MCF 10A (cell line): ENCODE measurements at regions of chr12 and their contacts with region 1.

Region 1: GRCh38 chr12:54958048-54958658 is 26.4 kb downstream of the TESPA1 start:
- DNase-seq: peak; percentile 71
- H3K4me3 Mint-ChIP-seq: no peak overlapping the region
- H3K27ac Mint-ChIP-seq: no peak overlapping the region
- H3K4me1 Mint-ChIP-seq: no peaks in the 10 kb centered on the region
- H3K27me3 Mint-ChIP-seq: peaks cover 48% of the 10 kb centered on the region
- CTCF ChIP-seq: peak; percentile 71

Region 2: DNA sequence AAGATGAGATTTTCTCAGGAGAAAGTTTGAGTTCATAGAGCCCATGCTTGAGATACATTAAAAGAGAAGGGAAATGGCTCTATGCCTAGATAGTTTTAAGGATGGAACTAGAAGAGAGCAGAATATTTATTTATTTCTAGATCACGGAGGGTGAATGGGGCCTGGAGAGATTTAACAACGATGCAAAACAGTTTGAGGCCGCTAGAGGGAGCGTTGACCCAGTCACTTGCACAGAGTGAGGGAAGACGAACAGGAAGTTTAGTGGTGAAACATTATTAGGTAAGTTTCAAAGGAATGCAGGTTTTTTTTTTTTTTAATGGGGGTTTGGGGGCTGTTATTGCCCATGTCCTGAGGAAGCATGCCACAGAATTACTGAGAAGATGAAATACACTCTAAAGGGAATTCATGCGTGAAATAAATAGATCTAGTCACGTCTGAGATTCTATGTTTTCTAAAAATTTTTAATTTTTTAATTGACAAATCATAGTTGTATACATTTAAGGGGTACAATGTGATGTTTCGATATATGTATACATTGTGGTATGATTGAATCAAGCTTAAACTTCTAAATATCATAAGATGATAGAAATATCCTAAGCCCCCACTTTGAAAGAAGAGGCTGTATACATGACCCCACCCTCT is 354.9 kb before region 1 on chr12:
- CTCF ChIA-PET with region 1: interaction called, 9 read pairs
- POLR2A ChIA-PET with region 1: no interaction called
- intact Hi-C with region 1: loop called (anchors 1 kb)
- DNase-seq: peak; percentile 78
- H3K4me3 Mint-ChIP-seq: no peak overlapping the region
- H3K27ac Mint-ChIP-seq: no peak overlapping the region
- H3K4me1 Mint-ChIP-seq: peaks cover 7% of the 10 kb centered on the region
- H3K27me3 Mint-ChIP-seq: peaks cover 47% of the 10 kb centered on the region
- CTCF ChIP-seq: peak; percentile 73

Region 3: DNA sequence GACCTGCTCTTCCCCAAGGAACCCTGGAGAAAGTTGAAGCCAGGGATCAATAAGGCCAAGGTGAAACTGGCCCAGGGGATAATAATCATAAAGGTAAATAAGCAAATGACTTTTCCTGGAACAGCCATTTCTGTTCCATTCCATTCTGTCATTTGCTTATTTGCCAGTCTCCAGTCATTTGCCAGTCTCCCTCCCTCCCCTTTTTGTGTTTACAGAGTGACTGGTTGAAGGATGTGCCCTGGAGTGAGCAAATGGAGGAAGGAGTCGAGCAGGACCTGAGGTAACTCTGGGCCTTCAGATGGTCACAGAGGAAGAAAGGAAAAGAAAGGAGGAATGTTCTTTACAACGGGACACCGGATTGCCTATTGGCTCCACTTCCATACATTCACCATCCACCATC is 292.1 kb before region 1 on chr12:
- CTCF ChIA-PET with region 1: no interaction called
- POLR2A ChIA-PET with region 1: no interaction called
- intact Hi-C with region 1: no loop called
- DNase-seq: no peak
- H3K4me3 Mint-ChIP-seq: no peak overlapping the region
- H3K27ac Mint-ChIP-seq: no peak overlapping the region
- H3K4me1 Mint-ChIP-seq: no peaks in the 10 kb centered on the region
- H3K27me3 Mint-ChIP-seq: peaks cover 27% of the 10 kb centered on the region
- CTCF ChIP-seq: no peak

Region 4: GRCh38 chr12:54701940-54702592 is 256.1 kb before region 1 on chr12:
- CTCF ChIA-PET with region 1: interaction called, 34 read pairs
- POLR2A ChIA-PET with region 1: no interaction called
- intact Hi-C with region 1: loop called (anchors 1 kb)
- DNase-seq: peak; percentile 60
- H3K4me3 Mint-ChIP-seq: no peak overlapping the region
- H3K27ac Mint-ChIP-seq: no peak overlapping the region
- H3K4me1 Mint-ChIP-seq: no peaks in the 10 kb centered on the region
- H3K27me3 Mint-ChIP-seq: peaks cover 75% of the 10 kb centered on the region
- CTCF ChIP-seq: peak; percentile 45

Region 5: GRCh38 chr12:54759751-54760150 is 198.4 kb before region 1 on chr12:
- CTCF ChIA-PET with region 1: interaction called, 74 read pairs
- POLR2A ChIA-PET with region 1: no interaction called
- intact Hi-C with region 1: loop called (anchors 1 kb)
- DNase-seq: peak; percentile 69
- H3K4me3 Mint-ChIP-seq: no peak overlapping the region
- H3K27ac Mint-ChIP-seq: no peak overlapping the region
- H3K4me1 Mint-ChIP-seq: no peaks in the 10 kb centered on the region
- H3K27me3 Mint-ChIP-seq: peaks cover 55% of the 10 kb centered on the region
- CTCF ChIP-seq: peak; percentile 60

Region 6: GRCh38 chr12:54853995-54854566 is 104.1 kb before region 1 on chr12 and contains the start of gene MUCL1:
- CTCF ChIA-PET with region 1: interaction called, 111 read pairs
- POLR2A ChIA-PET with region 1: no interaction called
- intact Hi-C with region 1: loop called (anchors 1 kb)
- DNase-seq: peak; percentile 83
- H3K4me3 Mint-ChIP-seq: no peak within 1 kb of the TSS
- H3K27ac Mint-ChIP-seq: no peak within 1 kb of the TSS
- H3K4me1 Mint-ChIP-seq: no peaks in the 10 kb centered on the region
- H3K27me3 Mint-ChIP-seq: no peaks in the 10 kb centered on the region
- CTCF ChIP-seq: peak; percentile 86
- total RNA-seq, gene MUCL1: not detected in 2 replicates

Region 7: GRCh38 chr12:54935235-54935951 is 22.8 kb before region 1 on chr12:
- CTCF ChIA-PET with region 1: interaction called, 18 read pairs
- POLR2A ChIA-PET with region 1: no interaction called
- intact Hi-C with region 1: loop called (anchors 1 kb)
- DNase-seq: peak; percentile 93
- H3K4me3 Mint-ChIP-seq: peak overlapping the region; percentile 7
- H3K27ac Mint-ChIP-seq: peak overlapping the region; percentile 96
- H3K4me1 Mint-ChIP-seq: peaks cover 26% of the 10 kb centered on the region
- H3K27me3 Mint-ChIP-seq: no peaks in the 10 kb centered on the region
- CTCF ChIP-seq: peak; percentile 12

Region 8: DNA sequence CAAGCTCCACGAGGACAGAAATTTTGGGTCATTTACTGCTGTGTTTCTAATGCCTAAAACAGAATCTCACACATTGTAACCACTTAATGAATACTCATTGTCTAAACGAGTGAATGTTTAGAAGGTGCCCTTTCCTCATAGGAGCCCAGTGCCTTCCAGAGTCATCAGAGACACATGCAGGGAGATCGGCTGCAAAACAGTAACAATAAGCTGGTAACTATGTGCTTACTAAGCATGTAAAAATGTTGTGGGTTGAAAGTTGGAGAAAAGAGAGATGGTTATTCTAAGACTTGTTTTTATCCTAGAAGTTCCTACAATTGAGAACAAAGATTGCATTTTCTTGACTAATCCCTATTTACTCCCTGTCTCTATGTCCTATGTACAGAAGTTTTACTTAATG is 19.0 kb after region 1 on chr12:
- CTCF ChIA-PET with region 1: interaction called, 12 read pairs
- POLR2A ChIA-PET with region 1: no interaction called
- intact Hi-C with region 1: no loop called
- DNase-seq: peak; percentile 3
- H3K4me3 Mint-ChIP-seq: no peak overlapping the region
- H3K27ac Mint-ChIP-seq: no peak overlapping the region
- H3K4me1 Mint-ChIP-seq: no peaks in the 10 kb centered on the region
- H3K27me3 Mint-ChIP-seq: peaks cover 62% of the 10 kb centered on the region
- CTCF ChIP-seq: no peak